Posterior cingulate gyrus (tissue), 11 donors: ENCODE measurements at regions of chr16 and their contacts with region 1.

Region 1: GRCh38 chr16:81035398-81035974 is at the start of gene ATMIN:
- DNase-seq: peak; percentile 61 to 97 (median 77)

Region 2: DNA sequence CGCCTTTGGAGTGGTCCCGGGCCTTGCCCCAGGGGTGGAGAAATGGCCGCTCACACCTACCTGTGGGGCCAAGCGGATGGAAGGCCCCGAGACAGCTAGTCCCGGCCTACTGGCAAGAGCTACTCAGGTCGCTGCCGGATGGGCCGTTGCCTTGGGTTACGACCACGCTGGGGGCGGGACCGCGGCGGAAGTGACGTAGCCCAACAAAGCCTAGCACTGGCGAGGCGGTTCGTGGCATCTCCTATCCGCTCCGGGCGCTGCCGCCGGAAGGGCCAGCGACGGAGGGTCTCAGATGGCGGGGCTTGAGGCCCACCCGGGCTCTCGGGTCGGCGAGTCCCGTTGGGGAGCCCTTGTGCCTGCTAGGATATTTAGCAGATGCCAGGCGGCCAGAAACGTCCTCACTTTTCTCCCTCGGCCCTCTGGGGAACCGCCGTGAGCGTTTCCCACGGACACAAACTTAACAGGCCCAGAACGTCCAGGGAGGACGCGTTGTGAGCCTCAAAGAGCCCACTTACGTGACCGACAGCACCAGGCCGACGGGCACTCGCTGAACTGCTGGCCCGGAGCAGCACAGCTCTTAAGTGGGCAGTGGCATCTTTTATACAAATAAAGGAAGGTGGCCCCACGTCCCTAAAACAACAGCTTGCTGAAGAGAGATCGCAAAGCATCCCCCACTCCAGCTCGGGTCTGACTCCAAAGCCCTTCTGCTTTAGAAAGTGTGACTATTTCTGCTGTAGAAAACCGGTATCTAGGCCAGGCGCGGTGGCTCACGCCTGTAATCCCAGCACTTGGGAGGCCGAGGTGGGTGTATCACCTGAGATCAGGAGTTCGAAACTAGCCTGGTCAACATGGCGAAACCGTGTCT is 41.8 kb after region 1 on chr16 and contains the start of gene C16orf46:
- intact Hi-C with region 1: loop called (anchors 5 kb)
- DNase-seq: peak; percentile 98 to 100 (median 99)

Region 3: GRCh38 chr16:81198635-81199034 is 163.1 kb after region 1 on chr16:
- intact Hi-C with region 1: loop called (anchors 5 kb)
- DNase-seq: peak in 3 of 10 donors; percentile 10 to 87 (median 34)

Region 4: GRCh38 chr16:81879625-81880024 is 844.1 kb after region 1 on chr16:
- intact Hi-C with region 1: no loop called
- DNase-seq: no peak